MCF 10A (cell line): ENCODE measurements at regions of chr17 and their contacts with region 1.

Region 1: DNA sequence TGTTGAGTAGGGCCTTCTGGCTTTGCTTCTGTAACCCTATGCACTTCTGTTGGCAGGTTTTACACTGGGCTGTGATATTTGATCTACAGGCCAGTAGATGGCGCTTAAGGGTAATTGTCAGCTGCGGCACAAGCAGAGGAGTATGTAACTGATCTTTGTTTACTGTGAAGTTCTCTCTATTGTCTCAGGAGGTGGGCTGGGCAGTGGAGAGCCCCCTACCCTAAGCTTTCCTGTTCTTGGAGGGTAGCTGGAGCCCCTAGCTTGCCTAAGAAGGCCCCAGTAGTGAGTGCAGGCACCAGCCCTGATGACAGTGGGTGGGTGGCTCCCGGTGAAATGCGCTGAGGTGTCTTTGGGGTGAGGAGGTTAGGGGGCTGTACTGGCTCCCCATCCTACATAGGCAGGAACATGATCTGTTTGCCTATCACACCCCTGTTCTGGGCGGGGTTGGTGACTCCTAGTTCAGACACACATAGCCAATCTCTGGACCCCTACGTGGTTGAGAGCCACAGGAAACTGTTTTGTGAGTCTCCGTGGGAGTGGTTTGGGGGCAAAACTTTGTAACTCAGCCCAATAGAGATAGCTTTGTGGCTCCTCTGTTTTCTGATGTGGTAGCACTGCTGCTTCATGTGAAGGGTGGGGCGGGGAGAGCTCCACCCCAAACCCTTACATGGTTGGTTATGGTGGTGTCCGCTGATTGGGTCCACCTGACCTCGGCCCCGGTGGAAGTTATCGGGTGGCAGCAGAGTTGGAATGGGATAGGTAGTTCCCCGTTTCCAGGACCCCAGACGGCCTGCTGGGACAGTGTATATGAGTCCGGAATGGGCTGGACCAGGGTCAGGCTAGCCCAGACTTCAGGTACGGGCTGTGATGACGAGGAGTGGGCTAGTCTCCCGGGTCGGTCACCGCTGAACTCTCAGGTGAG is 60.4 kb downstream of the SLFN11 start:
- DNase-seq: peak; percentile 77
- H3K4me3 Mint-ChIP-seq: no peak overlapping the region
- H3K27ac Mint-ChIP-seq: no peak overlapping the region
- H3K4me1 Mint-ChIP-seq: peaks cover 14% of the 10 kb centered on the region
- H3K27me3 Mint-ChIP-seq: peaks cover 81% of the 10 kb centered on the region
- CTCF ChIP-seq: peak; percentile 77

Region 2: DNA sequence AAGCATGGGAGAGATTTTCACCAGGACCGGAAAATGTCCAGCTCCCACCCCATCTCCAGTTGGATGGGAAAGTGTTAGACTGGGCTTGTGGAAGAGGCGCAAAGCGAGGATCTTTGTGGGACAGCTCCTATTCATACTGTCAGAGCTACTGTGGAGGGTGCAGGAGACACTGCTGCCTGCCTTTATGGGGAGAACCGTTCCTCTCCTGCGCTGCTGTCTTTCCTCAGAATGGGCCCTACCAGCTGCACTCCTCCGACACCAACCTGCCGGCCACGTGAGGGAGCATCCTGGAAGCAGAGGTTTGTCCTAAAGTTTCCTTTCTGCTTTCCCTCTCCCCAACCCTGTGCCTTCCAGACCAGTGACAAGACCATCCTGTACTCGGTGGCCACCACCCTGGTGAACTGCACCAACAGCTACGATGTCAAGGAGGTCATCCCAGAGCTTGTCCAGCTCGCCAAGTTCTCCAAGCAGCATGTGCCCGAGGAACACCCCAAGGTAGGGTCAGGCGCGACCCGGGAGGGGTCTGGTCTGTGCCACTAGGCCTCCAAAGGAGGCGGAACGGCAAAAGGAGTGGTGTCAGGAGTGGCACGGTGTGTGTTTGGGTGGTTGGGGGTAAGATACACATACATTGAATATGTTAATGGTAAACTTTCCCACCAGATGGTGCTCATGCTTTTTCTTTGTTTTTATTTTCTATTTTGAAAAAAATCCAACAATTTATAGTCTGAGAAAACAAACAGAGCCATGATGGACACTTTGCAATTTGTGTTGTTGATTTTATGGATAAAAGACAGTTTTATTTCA is 141.9 kb before region 1 on chr17:
- CTCF ChIA-PET with region 1: interaction called, 7 read pairs
- POLR2A ChIA-PET with region 1: no interaction called
- intact Hi-C with region 1: loop called (anchors 1 kb)
- DNase-seq: peak; percentile 30
- H3K4me3 Mint-ChIP-seq: no peak overlapping the region
- H3K27ac Mint-ChIP-seq: no peak overlapping the region
- H3K4me1 Mint-ChIP-seq: peaks cover 5% of the 10 kb centered on the region
- H3K27me3 Mint-ChIP-seq: peaks cover 15% of the 10 kb centered on the region
- CTCF ChIP-seq: peak; percentile 26

Region 3: GRCh38 chr17:35299129-35299528 is 13.9 kb before region 1 on chr17:
- CTCF ChIA-PET with region 1: interaction called, 19 read pairs
- POLR2A ChIA-PET with region 1: no interaction called
- intact Hi-C with region 1: no loop called
- DNase-seq: no peak
- H3K4me3 Mint-ChIP-seq: no peak overlapping the region
- H3K27ac Mint-ChIP-seq: no peak overlapping the region
- H3K4me1 Mint-ChIP-seq: no peaks in the 10 kb centered on the region
- H3K27me3 Mint-ChIP-seq: peaks cover 66% of the 10 kb centered on the region
- CTCF ChIP-seq: no peak

Region 4: DNA sequence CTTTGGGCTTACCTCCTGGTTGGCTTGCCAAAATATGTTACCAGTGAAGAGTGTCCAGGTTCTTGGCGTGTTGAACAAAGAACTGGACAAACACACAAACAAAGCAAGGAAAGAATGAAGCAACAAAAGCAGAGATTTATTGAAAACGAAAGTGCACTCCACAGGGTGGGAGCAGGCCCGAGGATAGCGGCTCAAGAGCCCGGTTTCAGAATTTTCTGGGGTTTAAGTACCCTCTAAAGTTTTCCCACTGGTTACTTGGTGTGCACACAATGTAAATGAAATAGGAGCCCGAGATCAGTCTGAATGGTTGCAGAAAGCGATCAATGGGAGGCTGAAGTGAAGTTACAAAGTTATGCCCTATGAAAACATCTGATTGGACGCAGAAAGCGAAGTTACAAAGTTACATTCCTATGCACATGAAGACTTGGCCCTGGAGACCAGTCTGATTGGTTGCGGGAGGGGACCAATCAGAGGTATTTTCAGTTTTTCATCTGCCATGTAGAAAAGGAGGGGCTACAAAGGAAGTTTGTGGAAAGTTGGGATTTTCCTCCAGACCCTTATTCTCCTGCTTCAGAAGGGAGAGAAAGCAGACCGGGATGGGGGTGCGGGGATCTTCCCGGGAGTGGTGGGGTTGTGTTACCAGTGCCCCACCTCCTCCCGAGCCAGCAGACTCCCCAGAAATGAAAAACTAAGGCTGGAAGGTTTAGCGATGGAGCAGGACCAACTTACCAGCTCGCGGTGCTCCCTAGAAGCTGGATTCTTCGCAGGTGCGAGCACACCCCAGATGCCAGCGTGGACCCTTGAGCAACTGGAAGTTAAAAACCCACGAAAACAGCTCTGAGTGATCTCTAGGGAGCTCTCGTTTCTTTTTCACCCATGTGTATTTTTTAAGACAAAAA is 119.4 kb after region 1 on chr17 and contains the start of gene SLFN12:
- CTCF ChIA-PET with region 1: interaction called, 10 read pairs
- POLR2A ChIA-PET with region 1: interaction called, 16 read pairs
- intact Hi-C with region 1: loop called (anchors 1 kb)
- DNase-seq: peak; percentile 92
- H3K4me3 Mint-ChIP-seq: peak within 1 kb of the TSS; percentile 79
- H3K27ac Mint-ChIP-seq: peak within 1 kb of the TSS; percentile 85
- H3K4me1 Mint-ChIP-seq: peaks cover 21% of the 10 kb centered on the region
- H3K27me3 Mint-ChIP-seq: no peaks in the 10 kb centered on the region
- CTCF ChIP-seq: no peak
- total RNA-seq, gene SLFN12: 6.3 and 8.0 TPM in 2 replicates

Region 5: GRCh38 chr17:35519439-35519838 is 206.4 kb after region 1 on chr17:
- CTCF ChIA-PET with region 1: interaction called, 14 read pairs
- POLR2A ChIA-PET with region 1: no interaction called
- intact Hi-C with region 1: no loop called
- DNase-seq: peak; percentile 38
- H3K4me3 Mint-ChIP-seq: no peak overlapping the region
- H3K27ac Mint-ChIP-seq: no peak overlapping the region
- H3K4me1 Mint-ChIP-seq: no peaks in the 10 kb centered on the region
- H3K27me3 Mint-ChIP-seq: peaks cover 67% of the 10 kb centered on the region
- CTCF ChIP-seq: no peak

Region 6: DNA sequence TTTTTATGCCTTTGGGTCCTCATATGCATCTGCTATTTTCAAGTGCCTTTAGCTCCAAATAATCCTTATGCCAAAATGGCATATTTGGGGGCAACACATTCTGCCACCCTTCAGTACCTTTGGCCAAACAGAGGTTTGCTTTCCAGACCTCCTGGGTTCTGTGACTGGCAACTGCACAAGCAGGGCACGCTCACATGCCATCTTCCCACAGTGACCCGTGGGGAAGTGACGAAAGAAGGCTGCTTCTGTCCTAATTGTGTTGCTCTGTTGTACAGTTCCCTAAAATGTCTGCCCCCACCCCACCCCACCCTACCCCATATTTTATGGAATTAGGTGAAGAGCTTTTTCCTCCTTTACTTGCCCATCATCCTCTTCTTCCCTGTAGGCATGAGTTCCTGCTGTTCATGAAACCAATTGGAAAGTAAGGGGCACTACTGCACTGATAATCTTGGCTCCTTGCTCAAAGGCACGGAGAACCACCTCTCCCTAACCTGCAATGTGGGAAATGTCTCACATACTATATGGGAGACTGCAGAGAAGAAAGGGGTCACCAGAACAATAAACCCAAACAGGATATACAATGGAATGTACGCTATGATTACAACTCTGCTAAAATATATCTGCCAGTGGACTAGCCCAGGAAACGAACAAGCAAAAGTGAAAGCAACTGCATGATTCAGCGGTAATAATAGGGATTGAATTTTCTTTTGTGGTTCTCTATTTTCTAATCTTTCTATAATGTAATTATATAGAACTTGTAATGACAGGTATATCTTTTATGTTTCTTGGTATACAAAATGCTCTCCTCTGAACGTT is 227.7 kb after region 1 on chr17:
- CTCF ChIA-PET with region 1: interaction called, 394 read pairs
- POLR2A ChIA-PET with region 1: interaction called, 7 read pairs
- intact Hi-C with region 1: no loop called
- DNase-seq: peak; percentile 27
- H3K4me3 Mint-ChIP-seq: peak overlapping the region; percentile 43
- H3K27ac Mint-ChIP-seq: no peak overlapping the region
- H3K4me1 Mint-ChIP-seq: no peaks in the 10 kb centered on the region
- H3K27me3 Mint-ChIP-seq: peaks cover 11% of the 10 kb centered on the region
- CTCF ChIP-seq: no peak